PC-3 (cell line): ENCODE measurements at regions of chr6 and their contacts with region 1.

Region 1: GRCh38 chr6:56843573-56844349 is 111.1 kb upstream of the BEND6 start:
- DNase-seq: peak; percentile 89
- ATAC-seq: peak; percentile 80
- H3K4me3 ChIP-seq: peak overlapping the region; percentile 97
- H3K27ac ChIP-seq: peak overlapping the region; percentile 56
- H3K4me1 ChIP-seq: peaks cover 36% of the 10 kb centered on the region
- H3K27me3 ChIP-seq: no peaks in the 10 kb centered on the region
- CTCF ChIP-seq: peak; percentile 78

Region 2: DNA sequence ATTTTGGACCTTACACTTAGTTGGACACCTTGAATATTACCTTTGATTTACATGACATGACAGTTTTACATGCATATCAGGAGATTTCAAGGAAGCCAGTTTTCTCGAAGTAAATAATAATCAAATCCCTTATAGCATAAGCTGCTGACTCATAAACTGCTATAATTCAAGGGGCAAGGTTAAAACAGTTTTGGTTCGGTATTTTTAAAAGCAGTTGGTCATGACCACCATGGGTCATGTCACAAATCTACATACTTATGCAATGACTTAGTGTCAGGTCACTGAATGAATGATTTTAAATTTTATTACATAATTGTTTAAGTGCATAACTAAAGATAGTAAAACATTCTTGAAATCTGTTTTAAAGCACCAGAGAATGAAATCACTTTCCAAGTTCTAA is 359.1 kb before region 1 on chr6:
- CTCF ChIA-PET with region 1: no interaction called
- POLR2A ChIA-PET with region 1: no interaction called
- intact Hi-C with region 1: no loop called
- DNase-seq: peak; percentile 90
- ATAC-seq: peak; percentile 83
- H3K4me3 ChIP-seq: peak overlapping the region; percentile 33
- H3K27ac ChIP-seq: peak overlapping the region; percentile 92
- H3K4me1 ChIP-seq: peaks cover 28% of the 10 kb centered on the region
- H3K27me3 ChIP-seq: no peaks in the 10 kb centered on the region
- CTCF ChIP-seq: no peak

Region 3: GRCh38 chr6:56581296-56581925 is 262.4 kb before region 1 on chr6:
- CTCF ChIA-PET with region 1: no interaction called
- POLR2A ChIA-PET with region 1: no interaction called
- intact Hi-C with region 1: no loop called
- DNase-seq: no peak
- ATAC-seq: no peak
- H3K4me3 ChIP-seq: no peak overlapping the region
- H3K27ac ChIP-seq: no peak overlapping the region
- H3K4me1 ChIP-seq: peaks cover 22% of the 10 kb centered on the region
- H3K27me3 ChIP-seq: no peaks in the 10 kb centered on the region
- CTCF ChIP-seq: no peak

Region 4: GRCh38 chr6:56767892-56768531 is 75.7 kb before region 1 on chr6:
- CTCF ChIA-PET with region 1: interaction called, 7 read pairs
- POLR2A ChIA-PET with region 1: interaction called, 4 read pairs
- intact Hi-C with region 1: loop called (anchors 2 kb)
- DNase-seq: peak; percentile 21
- ATAC-seq: no peak
- H3K4me3 ChIP-seq: no peak overlapping the region
- H3K27ac ChIP-seq: no peak overlapping the region
- H3K4me1 ChIP-seq: peaks cover 40% of the 10 kb centered on the region
- H3K27me3 ChIP-seq: no peaks in the 10 kb centered on the region
- CTCF ChIP-seq: peak; percentile 44; the same call in 1 of the 2 replicates

Region 5: GRCh38 chr6:56808871-56809359 is 34.8 kb before region 1 on chr6:
- CTCF ChIA-PET with region 1: no interaction called
- POLR2A ChIA-PET with region 1: no interaction called
- intact Hi-C with region 1: loop called (anchors 5 kb)
- DNase-seq: peak; percentile 59
- ATAC-seq: peak; percentile 69
- H3K4me3 ChIP-seq: no peak overlapping the region
- H3K27ac ChIP-seq: no peak overlapping the region
- H3K4me1 ChIP-seq: peaks cover 40% of the 10 kb centered on the region
- H3K27me3 ChIP-seq: no peaks in the 10 kb centered on the region
- CTCF ChIP-seq: no peak

Region 6: GRCh38 chr6:56938649-56939191 is 95.0 kb after region 1 on chr6:
- CTCF ChIA-PET with region 1: no interaction called
- POLR2A ChIA-PET with region 1: no interaction called
- intact Hi-C with region 1: no loop called
- DNase-seq: peak; percentile 99
- ATAC-seq: peak; percentile 99
- H3K4me3 ChIP-seq: peak overlapping the region; percentile 48; the same call in 1 of the 2 replicates
- H3K27ac ChIP-seq: peak overlapping the region; percentile 85
- H3K4me1 ChIP-seq: peaks cover 19% of the 10 kb centered on the region
- H3K27me3 ChIP-seq: no peaks in the 10 kb centered on the region
- CTCF ChIP-seq: no peak